Psoas muscle (tissue), 8 donors: ENCODE measurements at regions of chr5 and their contacts with region 1.

Region 1: DNA sequence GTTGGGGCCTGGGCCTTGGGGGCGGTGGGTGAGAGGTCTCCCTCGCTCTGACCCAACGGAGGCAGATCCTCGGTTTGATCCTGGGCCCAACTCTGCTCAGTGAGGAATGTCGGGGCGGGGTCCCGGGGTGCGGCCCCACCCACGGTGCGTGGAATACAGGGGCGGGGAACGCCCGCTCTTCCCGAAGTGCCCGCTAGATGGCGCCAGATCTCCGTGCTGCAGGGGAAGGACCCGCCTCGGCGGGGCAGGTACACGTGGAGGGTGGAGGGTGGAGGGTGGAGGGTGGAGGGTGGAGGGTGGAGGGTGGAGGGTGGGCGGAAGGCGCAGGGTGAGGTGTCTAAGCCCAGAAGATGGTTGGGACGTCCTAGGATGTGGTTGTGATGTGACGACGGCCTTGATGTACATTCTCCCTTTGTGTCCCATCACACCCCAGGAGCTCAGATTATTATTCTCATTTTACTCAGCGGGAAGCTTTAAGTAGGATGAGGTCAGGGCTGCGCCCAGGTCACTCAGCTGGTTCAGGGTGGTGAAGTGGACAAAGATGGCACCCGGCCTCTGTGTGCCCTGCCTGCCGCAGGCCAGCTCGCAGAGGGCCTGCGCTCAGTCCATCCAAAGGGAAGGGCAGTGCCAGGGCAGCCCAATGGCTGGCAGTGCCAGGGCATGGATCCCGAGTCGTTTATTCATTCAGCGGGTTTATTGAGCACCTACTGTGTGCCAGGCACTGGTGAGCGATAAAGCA is 9.4 kb upstream of the RPS14 start:
- DNase-seq: peak; percentile 79 to 90
- ATAC-seq: peak; percentile 92 to 96 (median 94)
- H3K4me3 ChIP-seq: peak overlapping the region; percentile 41
- H3K27ac ChIP-seq: peak overlapping the region; percentile 76
- H3K4me1 ChIP-seq: peaks cover 26% of the 10 kb centered on the region
- H3K27me3 ChIP-seq: no peaks in the 10 kb centered on the region
- CTCF ChIP-seq: peak; percentile 81

Region 2: GRCh38 chr5:150523472-150524350 is 64.7 kb after region 1 on chr5:
- intact Hi-C with region 1: loop called (anchors 1 to 5 kb)
- DNase-seq: no peak
- ATAC-seq: peak; percentile 35 to 77 (median 52)
- H3K4me3 ChIP-seq: no peak overlapping the region
- H3K27ac ChIP-seq: peak overlapping the region; percentile 5
- H3K4me1 ChIP-seq: peaks cover 77% of the 10 kb centered on the region
- H3K27me3 ChIP-seq: no peaks in the 10 kb centered on the region
- CTCF ChIP-seq: peak; percentile 59

Region 3: DNA sequence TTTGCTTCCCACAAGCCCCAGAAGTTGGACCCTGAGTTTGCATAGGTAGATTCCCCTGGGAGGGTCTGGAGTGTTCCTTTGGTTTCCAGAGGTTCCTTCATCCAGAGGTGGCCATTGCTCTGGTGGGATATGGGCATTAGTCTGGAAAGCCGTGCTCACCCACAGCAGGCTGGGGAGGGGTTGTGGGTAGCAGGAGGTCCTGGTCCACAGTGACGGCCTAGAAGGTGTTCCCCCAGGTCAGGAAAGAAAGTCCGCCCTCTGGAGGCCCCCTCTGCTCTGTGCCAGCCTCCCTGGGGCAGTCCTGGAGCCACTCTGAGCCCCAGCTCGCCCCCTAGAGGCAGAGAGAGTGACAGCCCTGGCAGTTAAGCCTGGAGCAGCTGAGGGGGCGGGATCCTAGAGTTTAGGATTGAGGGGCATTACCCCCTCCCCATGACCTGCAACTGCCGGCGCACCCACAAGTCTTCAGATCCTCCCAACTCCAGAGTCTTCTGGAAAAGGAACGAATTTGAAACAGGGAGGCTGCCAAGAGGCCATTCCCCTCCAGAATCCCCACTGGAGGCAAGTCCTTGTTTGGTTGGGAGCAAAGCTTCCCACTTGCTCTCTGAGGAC is 85.7 kb after region 1 on chr5:
- intact Hi-C with region 1: loop called (anchors 1 to 2 kb)
- DNase-seq: peak; percentile 77 to 88
- ATAC-seq: peak; percentile 84 to 92 (median 88)
- H3K4me3 ChIP-seq: no peak overlapping the region
- H3K27ac ChIP-seq: no peak overlapping the region
- H3K4me1 ChIP-seq: peaks cover 10% of the 10 kb centered on the region
- H3K27me3 ChIP-seq: no peaks in the 10 kb centered on the region
- CTCF ChIP-seq: peak; percentile 82